ENCODE measurements at regions of chr9 and their contacts with region 1.

Region 1: DNA sequence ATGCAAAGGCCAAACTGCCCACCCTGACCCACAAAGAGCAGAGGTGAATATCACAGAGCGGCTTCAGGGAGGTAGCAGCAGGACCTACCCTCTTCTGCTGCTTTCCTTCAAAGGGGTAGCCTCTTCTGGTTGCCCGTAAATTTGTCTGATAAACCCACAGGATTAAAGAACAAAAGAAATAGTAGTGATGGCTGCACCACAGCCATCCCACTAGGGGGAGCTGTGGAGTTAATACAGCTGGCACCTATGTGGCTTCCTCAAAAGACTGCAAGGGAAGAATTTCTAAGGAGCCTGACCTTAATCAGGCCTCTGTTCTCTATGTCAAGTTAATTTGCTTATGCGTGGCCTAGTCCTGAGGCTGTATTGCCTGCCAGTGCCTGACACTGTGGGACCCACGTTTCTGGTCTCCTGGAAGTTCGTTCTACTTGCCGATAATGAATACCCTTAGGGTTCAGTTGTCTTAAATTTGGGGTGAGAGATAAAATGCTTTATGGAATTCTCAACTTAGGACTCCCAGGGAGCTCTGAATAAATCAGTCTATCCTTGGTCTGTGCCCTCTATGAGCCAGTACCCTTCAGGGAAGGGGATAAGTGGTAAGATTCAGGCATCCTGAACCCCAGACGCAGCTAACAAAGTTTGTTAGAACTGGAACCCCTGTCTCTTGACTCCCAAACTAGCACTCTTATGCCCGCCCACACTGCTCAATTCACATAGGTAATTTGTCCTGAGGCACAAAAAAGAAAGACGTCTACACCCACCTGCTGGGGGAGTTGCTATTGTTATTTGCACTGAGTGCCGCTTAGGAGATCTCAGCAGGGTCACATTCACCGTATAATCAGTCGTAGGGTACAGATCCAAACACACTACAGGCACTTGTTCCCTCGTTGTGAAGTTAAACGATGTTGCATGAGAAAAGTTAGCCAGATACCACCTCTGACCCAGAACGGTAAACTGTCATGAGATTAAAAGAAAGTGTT is 77.1 kb downstream of the SUSD1 start:
- DNase-seq: peak; percentile 56 to 86 (median 71)
- H3K4me3 ChIP-seq: no peak overlapping the region
- H3K27ac ChIP-seq: no peak overlapping the region
- H3K4me1 ChIP-seq: no peaks in the 10 kb centered on the region
- H3K27me3 ChIP-seq: no peaks in the 10 kb centered on the region
- CTCF ChIP-seq: peak; percentile 84 to 95 (median 90)
- POLR2A ChIP-seq: no peak

Region 2: DNA sequence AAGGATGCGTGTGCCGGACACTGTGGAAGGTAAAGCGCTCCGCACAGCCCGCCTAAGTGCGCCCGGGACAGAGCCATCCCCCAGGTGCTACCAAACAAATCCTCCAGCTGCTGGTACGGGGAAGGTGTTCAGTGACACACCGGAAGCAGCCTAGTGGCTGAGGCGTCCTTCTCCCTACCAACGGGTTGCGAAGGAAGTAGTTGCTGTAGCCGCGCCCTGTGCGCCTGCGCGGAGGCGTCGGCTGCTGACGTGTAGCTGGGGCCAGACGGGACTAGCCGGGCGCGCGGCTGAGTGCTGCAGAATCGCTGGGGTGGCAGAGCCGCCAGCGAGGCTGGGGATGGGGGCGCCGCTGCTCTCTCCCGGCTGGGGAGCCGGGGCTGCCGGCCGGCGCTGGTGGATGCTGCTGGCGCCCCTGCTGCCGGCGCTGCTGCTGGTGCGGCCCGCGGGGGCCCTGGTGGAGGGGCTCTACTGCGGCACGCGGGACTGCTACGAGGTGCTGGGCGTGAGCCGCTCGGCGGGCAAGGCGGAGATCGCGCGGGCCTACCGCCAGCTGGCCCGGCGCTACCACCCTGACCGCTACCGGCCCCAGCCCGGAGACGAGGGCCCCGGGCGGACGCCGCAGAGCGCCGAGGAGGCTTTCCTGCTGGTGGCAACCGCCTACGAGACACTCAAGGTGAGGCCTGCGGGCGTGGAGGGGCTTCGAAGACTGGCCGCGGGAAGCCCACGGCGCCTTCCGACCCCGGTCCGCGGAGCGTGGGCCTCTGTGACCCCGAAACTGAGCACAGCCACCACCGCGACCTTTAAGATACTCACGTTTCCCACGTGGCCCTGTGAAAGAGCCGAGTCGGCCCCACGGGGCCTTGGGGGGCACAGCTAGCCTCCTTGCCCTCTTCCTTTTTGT is 466.7 kb before region 1 on chr9 and contains the start of gene DNAJC25:
- intact Hi-C with region 1: no loop called
- DNase-seq: peak; percentile 96 to 99 (median 98)
- H3K4me3 ChIP-seq: peak within 1 kb of the TSS; percentile 35 to 99 (median 54)
- H3K27ac ChIP-seq: peak within 1 kb of the TSS; percentile 16 to 99 (median 88)
- H3K4me1 ChIP-seq: peaks cover 14 to 43% of the 10 kb centered on the region in 2 donors
- H3K27me3 ChIP-seq: no peaks in the 10 kb centered on the region
- CTCF ChIP-seq: no peak
- POLR2A ChIP-seq: peak; percentile 99 to 100
- total RNA-seq, gene DNAJC25: 13.4 to 29.8 (median 16.6) TPM

Region 3: DNA sequence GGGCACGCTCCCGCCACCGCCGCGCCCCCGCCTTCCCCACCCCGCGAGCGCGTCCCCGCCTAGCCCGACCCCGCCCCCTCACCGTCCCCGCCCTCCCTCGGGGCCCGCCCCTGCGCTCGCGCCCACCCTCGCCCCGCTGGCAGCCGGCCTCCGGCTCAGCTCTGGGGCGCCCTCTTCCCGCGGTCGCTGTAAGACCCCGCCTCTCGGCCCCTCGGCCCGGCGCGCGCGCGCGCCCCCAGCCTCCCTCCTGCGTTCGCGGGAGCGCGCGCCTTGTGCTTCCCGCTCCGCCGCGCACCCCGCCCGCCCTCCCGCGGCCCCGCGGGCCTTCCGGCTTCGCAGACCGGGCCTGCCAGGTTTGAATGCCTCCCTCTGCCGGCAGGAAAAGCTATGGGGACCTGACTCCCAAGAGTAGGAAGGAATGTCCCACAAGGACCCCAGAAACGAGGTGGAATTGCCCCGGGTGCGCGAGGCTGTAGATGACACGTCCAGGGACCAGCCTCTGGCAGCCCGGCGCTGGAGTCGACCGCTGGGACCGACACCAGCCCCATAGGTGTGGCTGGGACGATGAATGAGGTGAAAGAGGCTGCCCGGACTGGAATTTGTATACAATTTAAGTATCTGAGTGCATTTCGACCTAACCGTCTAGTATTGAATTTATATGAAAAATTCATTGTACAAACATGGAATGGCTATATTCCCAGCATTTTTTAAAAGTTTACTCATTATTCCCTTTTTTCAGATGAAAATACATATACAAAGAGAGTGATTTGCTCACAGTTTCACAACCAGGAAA is 235.8 kb after region 1 on chr9:
- intact Hi-C with region 1: loop called in 1 of 2 experiments (anchors 5 kb)
- DNase-seq: peak; percentile 92 to 96 (median 95)
- H3K4me3 ChIP-seq: peak overlapping the region in 2 of 4 donors; percentile 71 to 98
- H3K27ac ChIP-seq: peak overlapping the region; percentile 49 to 98 (median 96)
- H3K4me1 ChIP-seq: peaks cover 3 to 29% of the 10 kb centered on the region in 2 donors
- H3K27me3 ChIP-seq: no peaks in the 10 kb centered on the region
- CTCF ChIP-seq: peak; percentile 35 to 68 (median 59)
- POLR2A ChIP-seq: no peak

Region 4: DNA sequence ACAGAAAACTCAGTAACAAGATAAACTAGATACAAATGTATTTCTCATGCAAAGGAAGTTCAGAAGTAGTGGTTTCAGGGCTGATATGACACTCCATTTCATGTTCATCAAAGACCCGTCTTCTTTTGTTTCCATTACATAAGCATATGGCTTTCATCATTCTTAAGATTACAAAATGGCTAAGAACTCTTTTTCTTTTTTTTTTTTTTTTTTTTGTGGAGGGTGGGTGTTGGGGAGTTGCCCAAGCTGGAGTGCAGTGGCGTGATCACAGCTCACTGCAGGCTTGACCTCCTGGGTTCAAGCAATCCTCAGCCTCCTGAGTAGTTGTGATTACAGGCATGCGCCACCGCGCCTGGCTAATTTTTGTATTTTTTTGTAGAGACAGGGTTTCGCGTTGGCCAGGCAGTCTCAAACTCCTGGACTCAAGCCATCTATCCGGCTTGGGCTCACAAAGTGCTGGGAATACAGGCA is 257.5 kb after region 1 on chr9:
- intact Hi-C with region 1: loop called in 1 of 2 experiments (anchors 5 kb)
- DNase-seq: no peak
- H3K4me3 ChIP-seq: no peak overlapping the region
- H3K27ac ChIP-seq: no peak overlapping the region
- H3K4me1 ChIP-seq: no peaks in the 10 kb centered on the region
- H3K27me3 ChIP-seq: no peaks in the 10 kb centered on the region
- CTCF ChIP-seq: no peak
- POLR2A ChIP-seq: no peak

Region 5: DNA sequence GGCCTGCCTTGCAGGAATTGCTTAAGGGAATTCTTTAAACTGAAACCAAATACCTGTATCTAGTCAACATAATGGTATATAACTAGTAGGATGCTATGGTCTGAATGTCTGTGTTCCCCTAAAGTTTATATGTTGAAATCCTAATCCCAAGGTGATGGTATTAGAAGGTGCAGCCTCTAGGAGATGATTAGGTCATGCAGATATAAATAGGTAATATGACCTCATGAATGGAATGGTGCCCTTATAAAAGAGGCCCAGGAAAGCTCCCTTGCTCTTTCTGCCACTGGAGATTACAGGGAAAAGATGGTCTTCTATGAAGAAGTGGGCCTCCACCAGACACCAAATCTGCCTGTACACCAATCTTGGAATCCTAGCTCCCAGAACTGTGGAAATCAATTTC is 381.2 kb after region 1 on chr9:
- intact Hi-C with region 1: no loop called
- DNase-seq: no peak
- H3K4me3 ChIP-seq: no peak overlapping the region
- H3K27ac ChIP-seq: no peak overlapping the region
- H3K4me1 ChIP-seq: no peaks in the 10 kb centered on the region
- H3K27me3 ChIP-seq: no peaks in the 10 kb centered on the region
- CTCF ChIP-seq: no peak
- POLR2A ChIP-seq: no peak